ENCODE measurements at regions of chr2 and their contacts with region 1.

Region 1: GRCh38 chr2:195318440-195319111 is 338.4 kb upstream of the SLC39A10 start:
- DNase-seq: peak; percentile 67
- ATAC-seq: peak; percentile 29
- H3K4me3 ChIP-seq: no peak overlapping the region
- H3K27ac ChIP-seq: peak overlapping the region; percentile 38
- H3K4me1 ChIP-seq: peaks cover 29% of the 10 kb centered on the region
- H3K27me3 ChIP-seq: no peaks in the 10 kb centered on the region
- CTCF ChIP-seq: peak; percentile 84

Region 2: DNA sequence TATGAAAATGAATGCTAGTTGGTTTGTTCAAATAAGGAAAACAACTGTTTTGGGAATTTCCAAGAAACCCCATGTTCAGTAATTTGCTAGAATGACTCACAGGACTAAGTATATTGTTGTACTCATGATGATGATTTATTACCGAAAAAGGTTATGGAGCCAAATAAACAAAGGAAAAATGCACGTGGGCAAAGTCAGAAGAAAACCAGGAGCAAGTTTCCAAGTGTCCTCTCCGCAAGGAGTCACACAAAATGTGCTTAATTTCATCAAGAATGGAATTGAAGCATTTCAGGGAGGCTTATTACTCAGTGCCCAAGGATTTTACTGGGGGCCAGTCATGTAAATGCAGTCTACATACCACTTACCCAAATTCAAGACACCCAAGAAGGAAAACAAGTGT is 1471.4 kb before region 1 on chr2:
- CTCF ChIA-PET with region 1: no interaction called
- POLR2A ChIA-PET with region 1: no interaction called
- intact Hi-C with region 1: loop called (anchors 5 kb)
- DNase-seq: peak; percentile 58
- ATAC-seq: peak; percentile 14; the same call in 1 of the 2 replicates
- H3K4me3 ChIP-seq: no peak overlapping the region
- H3K27ac ChIP-seq: peak overlapping the region; percentile 46
- H3K4me1 ChIP-seq: peaks cover 29% of the 10 kb centered on the region
- H3K27me3 ChIP-seq: no peaks in the 10 kb centered on the region
- CTCF ChIP-seq: no peak

Region 3: GRCh38 chr2:194545978-194546377 is 772.6 kb before region 1 on chr2:
- CTCF ChIA-PET with region 1: no interaction called
- POLR2A ChIA-PET with region 1: no interaction called
- intact Hi-C with region 1: loop called (anchors 1 kb)
- DNase-seq: peak; percentile 47
- ATAC-seq: peak; percentile 34; the same call in 1 of the 2 replicates
- H3K4me3 ChIP-seq: no peak overlapping the region
- H3K27ac ChIP-seq: no peak overlapping the region
- H3K4me1 ChIP-seq: peaks cover 4% of the 10 kb centered on the region; the same call in 1 of the 2 replicates
- H3K27me3 ChIP-seq: no peaks in the 10 kb centered on the region
- CTCF ChIP-seq: peak; percentile 59

Region 4: GRCh38 chr2:194867328-194867727 is 451.2 kb before region 1 on chr2:
- CTCF ChIA-PET with region 1: no interaction called
- POLR2A ChIA-PET with region 1: no interaction called
- intact Hi-C with region 1: loop called (anchors 2 kb)
- DNase-seq: peak; percentile 44
- ATAC-seq: peak; percentile 81
- H3K4me3 ChIP-seq: no peak overlapping the region
- H3K27ac ChIP-seq: no peak overlapping the region
- H3K4me1 ChIP-seq: no peaks in the 10 kb centered on the region
- H3K27me3 ChIP-seq: no peaks in the 10 kb centered on the region
- CTCF ChIP-seq: peak; percentile 64

Region 5: GRCh38 chr2:195937176-195937575 is 618.6 kb after region 1 on chr2:
- CTCF ChIA-PET with region 1: no interaction called
- POLR2A ChIA-PET with region 1: no interaction called
- intact Hi-C with region 1: loop called (anchors 1 kb)
- DNase-seq: no peak
- ATAC-seq: no peak
- H3K4me3 ChIP-seq: no peak overlapping the region
- H3K27ac ChIP-seq: no peak overlapping the region
- H3K4me1 ChIP-seq: no peaks in the 10 kb centered on the region
- H3K27me3 ChIP-seq: no peaks in the 10 kb centered on the region
- CTCF ChIP-seq: no peak